Right cardiac atrium (tissue), 5 donors: ENCODE measurements at regions of chr20 and their contacts with region 1.

Region 1: GRCh38 chr20:23340524-23340923 is 10.1 kb upstream of the NXT1 start:
- DNase-seq: peak; percentile 64 to 88 (median 78)
- ATAC-seq: peak; percentile 80 to 90
- H3K4me3 ChIP-seq: no peak overlapping the region
- H3K27ac ChIP-seq: no peak overlapping the region
- H3K4me1 ChIP-seq: no peaks in the 10 kb centered on the region
- H3K27me3 ChIP-seq: no peaks in the 10 kb centered on the region

Region 2: GRCh38 chr20:22698259-22698842 is 642.2 kb before region 1 on chr20:
- intact Hi-C with region 1: loop called in 3 of 4 experiments (anchors 5 to 10 kb)
- DNase-seq: no peak
- ATAC-seq: peak in 1 of 2 donors; percentile 48
- H3K4me3 ChIP-seq: no peak overlapping the region
- H3K27ac ChIP-seq: no peak overlapping the region
- H3K4me1 ChIP-seq: peaks cover 5% of the 10 kb centered on the region
- H3K27me3 ChIP-seq: no peaks in the 10 kb centered on the region

Region 3: DNA sequence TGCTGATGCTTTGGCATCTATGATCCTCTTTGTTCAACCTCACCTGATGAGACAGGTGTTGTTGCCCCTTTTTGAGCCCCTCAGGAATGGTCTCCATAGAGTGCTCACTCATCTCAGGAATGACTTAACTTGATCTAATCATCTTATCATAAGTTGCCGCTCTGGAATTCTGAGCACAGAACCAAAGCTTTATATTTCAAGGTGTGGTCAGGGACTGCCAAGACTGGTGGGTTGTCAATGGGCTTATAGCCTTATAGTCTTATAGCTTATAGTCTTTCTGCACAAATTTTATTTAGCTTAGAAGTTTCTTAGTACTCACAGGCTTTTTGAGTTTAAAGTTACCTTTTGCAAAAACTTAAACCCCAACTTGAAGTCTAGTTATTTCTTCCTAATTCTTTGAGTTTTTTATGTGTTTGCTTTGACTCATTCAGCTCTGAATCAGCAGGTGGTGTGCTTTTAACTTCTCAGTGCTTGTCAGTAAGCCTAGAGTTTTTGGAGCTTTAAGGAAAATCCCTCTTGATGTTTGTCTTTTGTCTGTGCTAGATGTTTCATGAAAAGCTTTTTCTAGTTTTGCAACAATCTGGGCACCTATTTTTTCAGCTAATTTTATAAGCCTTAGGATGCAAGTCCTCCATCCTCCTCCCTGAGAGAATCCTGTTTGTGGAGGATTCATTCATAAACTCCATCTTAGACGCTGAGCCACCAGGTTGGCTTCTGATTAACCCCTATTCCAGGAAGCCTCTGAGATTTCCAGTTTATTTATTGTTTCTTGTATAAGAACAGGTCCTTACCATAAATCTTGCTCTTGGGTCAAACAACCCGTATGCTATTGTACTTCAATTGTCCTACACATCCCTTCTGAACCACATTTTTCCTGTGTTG is 377.7 kb before region 1 on chr20:
- intact Hi-C with region 1: no loop called
- DNase-seq: no peak
- ATAC-seq: no peak
- H3K4me3 ChIP-seq: no peak overlapping the region
- H3K27ac ChIP-seq: no peak overlapping the region
- H3K4me1 ChIP-seq: no peaks in the 10 kb centered on the region
- H3K27me3 ChIP-seq: no peaks in the 10 kb centered on the region

Region 4: GRCh38 chr20:23606652-23607049 is 266.1 kb after region 1 on chr20:
- intact Hi-C with region 1: no loop called
- DNase-seq: peak; percentile 79 to 93 (median 93)
- ATAC-seq: peak; percentile 86 to 92
- H3K4me3 ChIP-seq: no peak overlapping the region
- H3K27ac ChIP-seq: no peak overlapping the region
- H3K4me1 ChIP-seq: no peaks in the 10 kb centered on the region
- H3K27me3 ChIP-seq: no peaks in the 10 kb centered on the region